SK-MEL-5 (cell line): ENCODE measurements at regions of chr17 and their contacts with region 1.

Region 1: DNA sequence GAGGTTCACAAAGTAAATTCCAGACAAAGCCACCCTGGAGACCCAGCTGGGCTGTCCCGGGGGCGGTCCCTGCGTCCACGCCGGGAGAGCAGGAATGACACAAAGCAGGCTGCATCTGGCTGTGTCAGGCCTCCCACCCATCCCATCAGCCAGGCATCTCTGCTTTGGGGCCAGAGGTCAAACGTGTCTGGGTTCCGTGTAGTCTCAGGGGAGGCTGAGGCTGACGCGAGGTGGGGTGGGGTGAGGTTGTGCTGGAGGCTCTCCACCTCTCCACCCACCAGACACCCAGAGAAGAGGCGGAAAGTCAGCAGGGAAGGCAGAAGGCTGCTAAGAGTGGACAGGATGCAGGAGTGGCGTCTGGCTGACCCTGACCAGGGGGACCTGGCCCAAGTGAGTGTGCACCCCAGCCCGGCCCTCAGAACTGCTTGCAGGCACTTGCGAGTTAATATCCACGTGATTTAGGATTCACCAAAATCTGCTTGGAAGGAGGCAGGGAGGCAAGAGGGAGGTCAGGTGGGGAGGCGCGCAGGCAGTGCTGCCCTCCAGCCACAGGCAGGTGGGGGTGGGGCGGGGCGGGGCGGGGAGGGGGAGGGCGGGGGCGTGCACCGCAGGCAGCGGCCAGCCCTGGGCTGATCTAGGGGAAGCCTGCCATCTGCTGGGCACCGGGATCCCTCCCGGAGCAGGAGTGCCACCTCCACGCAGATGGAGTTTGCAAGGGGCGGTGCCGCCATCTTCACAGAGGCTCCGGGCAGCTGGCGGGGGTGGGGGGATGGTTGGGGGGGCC is 44.3 kb downstream of the TBC1D16 start:
- DNase-seq: peak; percentile 96

Region 2: DNA sequence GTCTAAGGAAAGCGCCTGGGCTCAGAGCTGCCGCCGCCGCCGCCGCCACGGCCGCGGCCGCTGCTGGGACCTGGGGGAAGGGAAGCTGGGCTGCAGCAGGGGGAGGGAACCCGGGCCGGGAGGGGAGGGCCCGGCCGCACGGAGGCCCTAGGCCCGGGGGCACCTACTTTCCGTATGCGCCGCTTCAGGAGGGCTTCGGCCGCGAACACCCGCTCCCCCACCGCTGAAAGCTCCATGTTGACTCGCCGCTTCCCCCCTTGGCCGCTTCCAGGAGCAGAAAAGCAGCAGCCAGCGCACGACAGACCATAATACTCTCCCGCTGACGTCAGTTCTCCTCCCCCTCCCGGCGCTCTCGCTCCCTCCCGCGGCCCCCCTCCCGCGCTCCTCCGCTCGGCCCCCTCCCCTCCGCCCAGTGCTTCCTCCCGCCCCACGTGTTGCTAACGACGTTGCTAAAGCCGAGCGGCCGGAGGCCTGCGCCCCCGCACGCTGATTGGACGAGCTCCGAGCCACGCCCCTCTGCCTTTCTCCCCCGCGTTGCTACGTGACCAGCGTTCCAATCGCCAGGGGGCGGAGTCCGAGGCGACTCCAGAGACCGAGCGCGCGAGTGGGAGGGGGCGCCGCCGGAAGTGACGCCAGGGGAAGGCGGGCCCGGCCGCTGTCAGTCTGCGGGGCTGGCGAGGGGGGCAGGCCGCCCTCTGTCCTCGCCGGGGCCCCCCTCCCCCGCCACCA is 194.4 kb before region 1 on chr17 and contains the start of gene CBX8:
- in situ Hi-C with region 1: loop called (anchors 25 kb)
- DNase-seq: peak; percentile 100
- total RNA-seq, gene CBX8: 31.3 and 34.4 TPM in 2 replicates

Region 3: DNA sequence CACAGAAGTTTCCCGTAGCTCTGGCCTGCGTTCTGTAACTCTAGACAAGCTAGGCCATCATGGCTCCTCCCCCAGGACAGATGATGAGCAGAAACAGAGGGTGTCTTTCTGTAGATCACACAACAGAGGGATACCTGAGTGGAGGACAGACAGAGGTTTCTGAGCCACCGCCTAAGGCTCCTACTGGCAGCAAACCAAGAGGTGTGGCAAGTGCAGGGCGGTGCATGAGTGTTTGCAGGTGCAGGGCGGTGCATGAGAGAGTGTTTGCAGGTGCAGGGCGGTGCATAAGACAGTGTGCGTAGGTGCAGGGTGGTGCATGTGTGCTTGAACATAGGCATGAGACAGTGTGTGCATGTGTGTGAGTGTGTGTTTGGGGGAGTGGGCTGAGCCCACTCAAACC is 98.9 kb before region 1 on chr17:
- in situ Hi-C with region 1: no loop called
- DNase-seq: no peak